Activated naive CD4-positive, alpha-beta T cell treated with anti-CD3 and anti-CD28 coated beads for 36 hours (primary cell): ENCODE measurements at regions of chr1 and their contacts with region 1.

Region 1: DNA sequence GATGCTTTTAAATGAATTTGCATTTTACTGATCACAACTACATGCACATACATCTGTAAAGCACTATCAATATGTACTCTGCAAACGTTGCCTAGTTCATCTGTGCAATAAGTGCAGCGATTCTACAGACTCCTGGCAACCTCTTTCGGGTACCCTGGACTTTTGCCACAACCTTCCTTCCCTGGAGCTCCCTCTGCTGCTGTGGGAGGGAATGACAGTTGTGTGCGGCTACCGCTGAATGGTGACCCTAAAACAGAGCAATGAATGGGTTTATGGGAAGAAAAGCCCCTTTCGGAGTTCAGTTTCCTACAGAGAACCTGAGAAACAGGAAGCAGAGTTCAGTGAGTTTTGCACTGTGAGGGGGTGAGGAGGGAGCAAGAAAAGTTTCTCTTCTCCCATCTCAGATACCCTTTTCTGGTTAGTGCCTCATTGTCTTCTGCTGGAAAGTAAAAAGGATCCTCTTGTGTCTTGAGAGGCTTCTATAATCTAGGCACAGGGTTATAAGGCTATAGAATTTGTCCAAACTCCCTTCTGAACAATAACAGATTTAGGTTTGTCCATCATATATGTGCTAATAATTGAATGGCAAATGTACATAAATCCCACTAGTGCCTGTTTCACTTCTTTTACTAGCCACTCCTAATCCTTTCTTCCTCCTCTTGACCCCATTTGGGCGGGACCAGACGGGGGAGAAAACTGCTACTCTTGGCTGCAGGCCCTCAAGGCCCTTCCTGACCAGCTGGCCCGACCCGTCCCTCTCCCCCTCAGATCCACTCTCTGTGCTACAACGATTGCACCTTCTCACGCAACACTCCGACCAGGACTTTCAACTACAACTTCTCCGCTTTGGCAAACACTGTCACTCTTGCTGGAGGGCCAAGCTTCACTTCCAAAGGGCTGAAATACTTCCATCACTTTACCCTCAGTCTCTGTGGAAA is 19.8 kb upstream of the SARS1 start:
- DNase-seq: peak; percentile 73
- H3K4me3 Mint-ChIP-seq: no peak overlapping the region
- H3K27ac Mint-ChIP-seq: no peak overlapping the region
- H3K4me1 Mint-ChIP-seq: peaks cover 4% of the 10 kb centered on the region
- H3K27me3 Mint-ChIP-seq: no peaks in the 10 kb centered on the region

Region 2: DNA sequence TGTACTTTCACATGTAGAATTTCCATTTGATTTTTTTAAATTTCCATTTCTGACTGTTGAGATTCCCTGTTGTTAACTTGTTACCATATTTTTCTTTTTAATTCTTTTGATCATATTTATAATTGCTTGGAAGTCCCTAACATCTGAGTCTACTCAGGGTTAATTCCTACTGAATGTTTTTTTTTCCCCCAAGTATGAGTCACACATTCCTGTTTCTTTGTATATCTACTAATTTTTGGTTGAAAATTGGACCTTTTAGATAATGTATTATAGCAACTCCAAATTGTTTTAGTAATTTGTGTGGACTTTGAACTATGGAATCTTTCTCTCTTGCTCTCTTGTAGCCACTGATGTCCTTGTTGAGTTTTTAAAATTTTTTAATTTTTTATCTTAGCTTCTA is 392.8 kb before region 1 on chr1:
- CTCF ChIA-PET with region 1: no interaction called
- intact Hi-C with region 1: no loop called
- DNase-seq: no peak
- H3K4me3 Mint-ChIP-seq: no peak overlapping the region
- H3K27ac Mint-ChIP-seq: no peak overlapping the region
- H3K4me1 Mint-ChIP-seq: peaks cover 3% of the 10 kb centered on the region
- H3K27me3 Mint-ChIP-seq: no peaks in the 10 kb centered on the region

Region 3: DNA sequence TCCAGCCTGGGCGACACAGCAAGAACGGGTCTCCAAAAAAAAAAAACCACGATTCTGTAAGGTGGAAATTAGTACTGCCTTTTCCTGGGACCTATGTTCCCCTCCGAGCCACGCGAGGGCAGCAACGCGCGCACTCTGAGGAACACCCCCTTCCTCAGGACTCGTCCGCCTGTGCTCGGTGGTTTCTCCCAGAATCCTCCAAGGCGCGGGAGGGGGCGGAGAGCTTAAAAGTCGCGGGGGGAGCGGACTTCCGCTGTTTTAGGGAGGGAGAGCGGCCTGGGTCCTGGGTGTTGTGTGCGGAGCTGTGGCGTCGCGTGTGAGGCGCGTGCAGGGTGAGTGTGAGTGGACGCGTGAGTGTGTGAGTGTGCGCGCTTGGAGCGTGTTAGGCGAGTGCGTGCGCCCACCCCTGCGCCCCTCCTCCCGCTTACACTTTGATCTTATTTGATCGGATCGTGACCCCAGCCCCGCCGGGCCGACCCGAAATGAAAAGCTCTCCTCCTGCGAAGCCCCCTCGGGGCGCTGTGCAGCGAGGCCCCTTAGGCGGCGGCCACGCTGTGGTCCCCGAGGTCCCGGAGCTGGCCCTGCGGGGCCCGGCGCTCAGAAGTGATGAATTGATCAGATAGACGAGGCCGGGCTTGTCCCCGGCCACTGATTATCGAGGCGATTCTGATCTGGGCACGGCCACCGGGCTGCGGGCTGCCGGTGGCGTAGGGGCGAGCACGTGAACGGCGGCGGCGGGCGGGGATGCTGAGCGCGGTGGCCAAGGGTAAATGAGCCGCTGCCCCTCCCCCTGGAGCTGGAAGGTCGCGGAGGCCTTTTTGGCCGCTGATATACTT is 93.8 kb before region 1 on chr1:
- CTCF ChIA-PET with region 1: interaction called, 3 read pairs
- intact Hi-C with region 1: loop called (anchors 1 kb)
- DNase-seq: peak; percentile 98
- H3K4me3 Mint-ChIP-seq: peak overlapping the region; percentile 99
- H3K27ac Mint-ChIP-seq: peak overlapping the region; percentile 97
- H3K4me1 Mint-ChIP-seq: peaks cover 23% of the 10 kb centered on the region
- H3K27me3 Mint-ChIP-seq: peaks cover 2% of the 10 kb centered on the region

Region 4: DNA sequence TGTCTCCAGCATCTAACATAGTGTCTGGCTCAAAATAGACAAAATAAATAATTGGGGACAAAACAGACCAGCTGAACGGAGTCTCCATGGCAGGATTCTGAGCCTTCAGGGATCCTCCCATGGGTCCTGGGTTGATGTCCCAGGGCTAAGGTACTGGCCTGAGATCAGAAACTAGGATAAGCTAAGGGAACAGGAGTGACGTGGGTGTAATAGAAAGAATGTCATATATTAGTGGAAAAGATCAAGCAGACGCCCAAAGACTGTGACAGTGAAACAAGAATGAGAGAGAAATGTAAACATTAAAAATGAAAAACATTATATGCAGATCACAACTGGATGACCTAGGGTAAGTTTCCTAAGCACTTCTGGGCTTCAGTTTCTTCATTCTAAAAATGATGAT is 25.5 kb before region 1 on chr1:
- CTCF ChIA-PET with region 1: no interaction called
- intact Hi-C with region 1: loop called (anchors 1 kb)
- DNase-seq: no peak
- H3K4me3 Mint-ChIP-seq: no peak overlapping the region
- H3K27ac Mint-ChIP-seq: no peak overlapping the region
- H3K4me1 Mint-ChIP-seq: no peaks in the 10 kb centered on the region
- H3K27me3 Mint-ChIP-seq: no peaks in the 10 kb centered on the region